ENCODE measurements at regions of chr7 and their contacts with region 1.

Region 1: GRCh38 chr7:143372070-143372469 is 9.1 kb upstream of the ZYX start:
- DNase-seq: peak in 1 of 2 donors; percentile 73
- ATAC-seq: peak; percentile 14 to 64 (median 52)
- H3K4me3 ChIP-seq: no peak overlapping the region
- H3K4me3 Mint-ChIP-seq: peak overlapping the region; percentile 49
- H3K27ac ChIP-seq: peak overlapping the region; percentile 28
- H3K27ac Mint-ChIP-seq: peak overlapping the region; percentile 76 to 80
- H3K4me1 ChIP-seq: peaks cover 57% of the 10 kb centered on the region
- H3K4me1 Mint-ChIP-seq: peaks cover 50 to 55% of the 10 kb centered on the region in 2 donors
- H3K27me3 ChIP-seq: no peaks in the 10 kb centered on the region
- H3K27me3 Mint-ChIP-seq: no peaks in the 10 kb centered on the region
- CTCF ChIP-seq: no peak

Region 2: GRCh38 chr7:142796608-142797385 is 575.3 kb before region 1 on chr7:
- intact Hi-C with region 1: loop called (anchors 10 kb)
- DNase-seq: peak in 1 of 2 donors; percentile 32
- ATAC-seq: peak; percentile 19 to 38 (median 36)
- H3K4me3 ChIP-seq: peak overlapping the region; percentile 93
- H3K4me3 Mint-ChIP-seq: peak overlapping the region; percentile 99
- H3K27ac ChIP-seq: peak overlapping the region; percentile 98
- H3K27ac Mint-ChIP-seq: peak overlapping the region; percentile 92 to 100
- H3K4me1 ChIP-seq: peaks cover 64% of the 10 kb centered on the region
- H3K4me1 Mint-ChIP-seq: peaks cover 76 to 92% of the 10 kb centered on the region in 2 donors
- H3K27me3 ChIP-seq: no peaks in the 10 kb centered on the region
- H3K27me3 Mint-ChIP-seq: no peaks in the 10 kb centered on the region
- CTCF ChIP-seq: no peak

Region 3: DNA sequence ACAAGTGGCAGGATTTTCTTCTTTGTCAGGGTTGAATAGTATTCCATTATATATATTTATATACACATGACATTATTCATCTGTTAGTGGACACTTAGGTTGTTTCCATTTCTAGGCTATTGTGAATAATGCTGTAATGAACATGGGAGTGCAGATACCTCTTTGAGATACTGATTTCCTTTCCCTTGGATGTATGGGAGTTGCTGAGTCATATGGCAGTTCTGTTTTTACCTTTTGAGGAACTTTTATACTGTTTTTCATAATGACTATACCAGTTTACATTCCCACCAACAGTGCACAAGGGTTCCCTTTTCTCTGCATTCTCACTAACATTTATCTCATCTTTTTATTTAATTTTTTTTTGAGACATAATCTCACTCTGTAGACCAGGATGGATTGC is 57.9 kb before region 1 on chr7:
- intact Hi-C with region 1: loop called (anchors 5 kb)
- DNase-seq: no peak
- ATAC-seq: no peak
- H3K4me3 ChIP-seq: no peak overlapping the region
- H3K4me3 Mint-ChIP-seq: no peak overlapping the region
- H3K27ac ChIP-seq: no peak overlapping the region
- H3K27ac Mint-ChIP-seq: no peak overlapping the region
- H3K4me1 ChIP-seq: peaks cover 28% of the 10 kb centered on the region
- H3K4me1 Mint-ChIP-seq: peaks cover 21 to 24% of the 10 kb centered on the region in 2 donors
- H3K27me3 ChIP-seq: no peaks in the 10 kb centered on the region
- H3K27me3 Mint-ChIP-seq: no peaks in the 10 kb centered on the region
- CTCF ChIP-seq: no peak

Region 4: GRCh38 chr7:143416565-143417149 is 44.6 kb after region 1 on chr7:
- intact Hi-C with region 1: loop called (anchors 5 kb)
- DNase-seq: peak in 1 of 2 donors; percentile 78
- ATAC-seq: peak; percentile 57 to 65 (median 65)
- H3K4me3 ChIP-seq: no peak overlapping the region
- H3K4me3 Mint-ChIP-seq: no peak overlapping the region
- H3K27ac ChIP-seq: no peak overlapping the region
- H3K27ac Mint-ChIP-seq: no peak overlapping the region
- H3K4me1 ChIP-seq: no peaks in the 10 kb centered on the region
- H3K4me1 Mint-ChIP-seq: peaks cover 0 to 6% of the 10 kb centered on the region in 2 donors
- H3K27me3 ChIP-seq: peaks cover 5% of the 10 kb centered on the region
- H3K27me3 Mint-ChIP-seq: peaks cover 38 to 41% of the 10 kb centered on the region in 2 donors
- CTCF ChIP-seq: peak; percentile 86